ENCODE measurements at regions of chr2 and their contacts with region 1.

Region 1: DNA sequence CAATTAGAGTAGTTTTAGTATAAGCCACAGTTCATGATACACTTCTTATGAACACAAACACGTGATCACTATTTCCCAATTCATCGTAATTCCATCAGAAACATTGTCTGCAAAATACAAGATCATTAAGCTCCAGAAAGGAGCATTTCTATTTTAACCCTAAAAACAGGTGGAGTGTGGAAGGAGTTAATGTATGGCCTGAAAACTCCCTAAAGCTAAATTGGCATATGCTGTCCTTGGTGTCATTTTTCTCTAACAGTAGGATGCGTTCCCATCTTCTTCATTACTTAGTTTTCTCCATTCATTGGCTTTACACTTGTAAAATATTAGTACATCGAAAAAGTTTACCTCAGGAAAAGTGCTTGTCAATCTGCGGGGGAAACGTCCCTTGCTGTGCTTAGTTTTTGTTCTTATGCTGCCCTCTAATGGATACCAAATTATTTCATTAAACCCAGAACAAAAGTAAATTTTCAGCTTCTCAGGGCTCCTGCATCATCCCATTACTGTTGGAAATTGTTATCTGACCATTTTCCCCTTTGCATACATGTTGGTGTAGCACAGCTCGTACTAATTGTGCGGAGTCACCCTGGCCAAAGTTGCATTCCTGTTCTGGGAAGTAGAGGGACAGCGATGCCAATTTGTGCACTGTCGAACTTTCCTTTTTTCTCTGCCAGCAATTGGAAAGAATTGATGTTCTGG is 153.4 kb downstream of the GPD2 start:
- DNase-seq: no peak
- H3K4me3 ChIP-seq: no peak overlapping the region
- H3K27ac ChIP-seq: no peak overlapping the region
- H3K4me1 ChIP-seq: peaks cover 0 to 10% (median 2%) of the 10 kb centered on the region in 6 donors
- H3K27me3 ChIP-seq: no peaks in the 10 kb centered on the region
- CTCF ChIP-seq: peak in 10 of 11 experiments; percentile 11 to 57 (median 42)
- POLR2A ChIP-seq: no peak

Region 2: GRCh38 chr2:156332534-156333273 is 256.8 kb before region 1 on chr2 and contains the start of gene NR4A2:
- intact Hi-C with region 1: loop called (anchors 10 kb)
- DNase-seq: peak; percentile 97
- H3K4me3 ChIP-seq: peak within 1 kb of the TSS; percentile 57 to 85 (median 70)
- H3K27ac ChIP-seq: peak within 1 kb of the TSS; percentile 95 to 99 (median 98)
- H3K4me1 ChIP-seq: peaks cover 16 to 65% (median 38%) of the 10 kb centered on the region in 6 donors
- H3K27me3 ChIP-seq: peaks cover 0 to 43% (median 28%) of the 10 kb centered on the region in 7 donors
- CTCF ChIP-seq: peak in 2 of 11 experiments; percentile 13 to 15
- POLR2A ChIP-seq: peak; percentile 75 to 96 (median 83)
- total RNA-seq, gene NR4A2: 0.56 to 13.1 (median 3.2) TPM

Region 3: DNA sequence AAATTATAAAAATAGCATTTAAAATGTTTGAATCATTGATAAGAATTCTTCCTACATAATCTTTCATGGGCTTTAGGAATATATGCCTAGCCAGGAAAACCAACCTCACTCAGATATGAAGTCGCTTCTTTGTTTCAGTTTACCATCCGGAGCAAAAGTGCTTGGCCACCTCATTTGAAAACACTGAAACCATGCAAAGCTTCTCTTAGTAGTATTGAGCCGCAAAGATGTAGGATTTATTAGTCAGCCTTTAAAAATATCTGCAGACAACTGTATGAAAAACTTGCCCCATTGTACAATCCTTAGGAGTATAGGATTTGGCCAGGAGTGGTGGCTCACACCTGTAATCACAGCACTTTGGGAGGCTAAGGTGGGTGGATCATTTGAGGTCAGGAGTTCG is 177.7 kb before region 1 on chr2:
- intact Hi-C with region 1: no loop called
- DNase-seq: no peak
- H3K4me3 ChIP-seq: no peak overlapping the region
- H3K27ac ChIP-seq: no peak overlapping the region
- H3K4me1 ChIP-seq: no peaks in the 10 kb centered on the region
- H3K27me3 ChIP-seq: no peaks in the 10 kb centered on the region
- CTCF ChIP-seq: no peak
- POLR2A ChIP-seq: no peak